HEK293T (cell line): ENCODE measurements at regions of chr10 and their contacts with region 1.

Region 1: GRCh38 chr10:103488251-103488650 is 5.3 kb upstream of the NEURL1 start:
- DNase-seq: no peak

Region 2: DNA sequence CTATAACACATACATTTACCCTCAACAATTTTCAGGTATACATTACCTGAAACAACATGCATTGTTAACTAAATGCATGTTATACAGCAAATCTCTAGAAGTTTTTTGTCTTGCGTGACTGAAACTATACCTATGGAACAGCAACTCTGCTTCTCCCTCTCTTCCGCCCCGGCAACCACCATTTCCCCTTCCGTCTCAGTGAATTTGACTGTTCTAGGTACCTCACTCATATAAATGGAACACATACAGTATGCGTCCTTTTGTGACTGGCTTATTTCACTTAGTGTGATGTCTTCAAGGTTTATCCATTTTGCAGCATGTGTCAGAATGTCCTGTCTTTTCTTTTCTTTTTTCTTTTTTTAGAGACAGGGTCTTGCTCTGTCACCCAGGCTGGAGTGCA is 58.6 kb before region 1 on chr10:
- CTCF ChIA-PET with region 1: interaction called, 10 read pairs
- POLR2A ChIA-PET with region 1: no interaction called
- DNase-seq: no peak